WTC11 (cell line): ENCODE measurements at regions of chr12 and their contacts with region 1.

Region 1: DNA sequence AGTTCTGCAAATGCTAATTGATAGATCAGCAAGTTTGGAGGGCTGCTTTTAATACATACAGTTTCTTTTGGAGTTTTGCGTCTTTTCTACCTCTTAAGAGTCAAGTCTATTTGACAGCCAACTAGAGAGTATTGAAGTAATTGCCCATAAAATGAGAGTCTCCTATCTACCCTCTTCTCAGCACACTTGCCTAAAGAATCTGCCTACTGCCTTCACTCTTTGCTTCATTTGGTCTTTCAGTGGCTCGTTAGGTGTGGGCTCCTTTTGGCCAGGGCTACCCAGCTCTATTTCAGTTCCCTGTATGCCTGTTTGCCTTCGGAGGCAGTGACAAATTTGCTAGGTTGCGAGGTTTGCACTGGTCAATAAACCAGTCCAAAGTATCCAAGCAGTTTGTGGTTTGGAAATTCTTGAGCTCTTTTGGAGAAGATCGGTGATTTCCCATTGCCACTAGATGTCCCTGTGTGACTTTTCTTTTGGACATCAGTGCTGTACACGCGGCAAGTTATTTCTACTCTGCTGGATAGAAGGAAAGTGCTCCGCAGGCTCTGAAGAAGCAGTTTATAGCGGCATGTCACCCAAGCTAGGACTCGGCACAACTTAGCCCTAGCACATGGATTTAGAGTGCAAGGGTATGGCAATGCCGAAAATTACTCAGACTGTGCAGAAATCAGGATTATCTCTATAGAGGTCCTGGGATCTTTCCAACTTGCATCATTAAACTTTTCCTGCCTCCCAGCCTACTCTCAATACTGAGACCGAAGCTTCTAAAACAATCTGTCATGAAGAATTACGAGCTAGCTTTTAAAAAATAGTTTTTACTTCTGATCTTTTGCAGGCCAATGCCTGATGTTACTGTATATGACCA is 38.6 kb downstream of the MGST1 start:
- DNase-seq: peak; percentile 12
- ATAC-seq: peak; percentile 85
- H3K4me3 Mint-ChIP-seq: no peak overlapping the region
- H3K27ac Mint-ChIP-seq: peak overlapping the region; percentile 58; the same call in 1 of the 2 replicates
- H3K4me1 Mint-ChIP-seq: peaks cover 21% of the 10 kb centered on the region
- H3K27me3 Mint-ChIP-seq: no peaks in the 10 kb centered on the region; the same call in 1 of the 2 replicates
- CTCF ChIP-seq: no peak

Region 2: DNA sequence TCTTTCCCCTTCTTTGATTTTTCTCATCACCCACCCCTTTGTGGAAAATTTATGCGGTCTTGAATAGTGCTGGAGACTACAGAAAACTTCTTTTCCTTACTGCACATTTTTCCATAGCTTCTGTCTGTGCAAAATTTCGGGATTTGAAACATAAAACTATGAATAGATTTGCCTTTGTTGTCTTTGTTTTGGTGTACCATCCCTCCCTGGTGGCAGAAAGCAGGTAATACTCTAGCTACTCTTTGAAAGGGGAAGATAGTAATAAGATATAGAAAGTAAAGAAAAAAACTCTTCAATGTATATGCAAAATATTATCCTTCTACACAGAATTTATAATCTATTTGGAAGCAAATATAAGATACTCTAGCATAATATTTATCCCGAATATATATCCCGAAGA is 299.1 kb after region 1 on chr12:
- CTCF ChIA-PET with region 1: interaction called, 19 read pairs
- POLR2A ChIA-PET with region 1: no interaction called
- DNase-seq: no peak
- ATAC-seq: no peak
- H3K4me3 Mint-ChIP-seq: no peak overlapping the region
- H3K27ac Mint-ChIP-seq: no peak overlapping the region
- H3K4me1 Mint-ChIP-seq: 0 out of 2 replicates have a peak, but pooled peaks cover 3% of the 10 kb centered on the region
- H3K27me3 Mint-ChIP-seq: no peaks in the 10 kb centered on the region
- CTCF ChIP-seq: no peak

Region 3: GRCh38 chr12:16844875-16845274 is 458.9 kb after region 1 on chr12:
- CTCF ChIA-PET with region 1: interaction called, 16 read pairs
- POLR2A ChIA-PET with region 1: no interaction called
- DNase-seq: peak; percentile 29
- ATAC-seq: peak; percentile 97
- H3K4me3 Mint-ChIP-seq: no peak overlapping the region
- H3K27ac Mint-ChIP-seq: no peak overlapping the region
- H3K4me1 Mint-ChIP-seq: 0 out of 2 replicates have a peak, but pooled peaks cover 4% of the 10 kb centered on the region
- H3K27me3 Mint-ChIP-seq: no peaks in the 10 kb centered on the region
- CTCF ChIP-seq: no peak